ENCODE measurements at regions of chr16 and their contacts with region 1.

Region 1: DNA sequence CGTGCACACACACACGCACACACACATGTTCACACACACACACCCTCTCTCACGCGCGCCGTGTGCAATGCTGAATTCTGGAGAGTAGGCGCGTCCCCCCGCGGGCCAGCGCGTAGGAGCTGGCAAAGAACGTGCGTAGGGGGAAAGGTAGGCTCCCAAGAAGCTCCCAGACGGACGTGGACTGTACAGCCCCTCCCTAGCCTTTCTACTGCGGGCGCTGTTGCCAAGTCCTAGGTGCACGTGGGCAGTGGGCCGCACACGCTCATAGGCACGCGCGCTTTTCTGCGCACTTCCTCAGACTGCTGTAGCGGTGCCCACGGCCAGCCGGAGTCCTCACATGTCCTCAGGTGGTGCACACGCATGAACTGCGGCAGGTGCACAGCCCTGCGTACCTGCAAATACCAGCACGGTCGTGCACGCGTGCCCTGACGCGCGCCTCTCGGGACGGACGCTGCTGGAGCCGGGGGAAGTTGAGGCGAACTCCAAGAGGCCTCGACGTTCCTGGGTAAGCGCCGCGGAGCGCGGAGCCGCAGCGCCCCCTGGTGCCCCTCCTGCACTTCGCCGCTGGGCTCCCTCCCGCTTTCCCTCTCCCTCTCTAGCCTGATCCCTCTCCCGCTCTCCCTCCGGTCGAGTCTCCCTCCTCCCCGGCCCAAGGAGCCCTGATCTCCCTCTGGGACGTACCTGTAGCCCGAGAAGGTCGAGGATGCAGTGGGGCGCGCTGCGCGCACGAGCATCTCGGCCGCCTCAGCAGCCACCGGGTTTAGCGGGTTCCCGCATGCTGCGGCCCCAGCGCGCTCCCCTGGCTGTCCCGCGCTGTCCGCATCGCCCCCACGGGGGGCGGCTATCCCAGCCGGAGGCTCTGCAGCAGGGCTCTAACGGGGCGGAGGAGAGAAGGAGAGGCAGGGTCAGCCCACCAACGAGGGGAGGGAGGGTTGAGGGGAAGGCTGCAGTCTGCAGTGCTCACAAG is 749 bp downstream of the GRIN2A start:
- DNase-seq: peak; percentile 70 to 95
- H3K4me3 ChIP-seq: peak overlapping the region; percentile 50 to 73 (median 60)
- H3K27ac ChIP-seq: no peak overlapping the region
- H3K4me1 ChIP-seq: peaks cover 0 to 6% (median 0%) of the 10 kb centered on the region in 4 experiments; a peak in 3 of 7 replicates
- H3K27me3 ChIP-seq: peaks cover 26 to 50% (median 44%) of the 10 kb centered on the region in 4 experiments
- CTCF ChIP-seq: peak; percentile 75 to 97 (median 95)
- EP300 ChIP-seq: no peak
- POLR2A ChIP-seq: no peak
- RAD21 ChIP-seq: peak; percentile 93

Region 2: GRCh38 chr16:10080036-10080772 is 101.3 kb before region 1 on chr16:
- CTCF ChIA-PET with region 1: interaction called, 16 read pairs
- POLR2A ChIA-PET with region 1: no interaction called
- DNase-seq: no peak
- H3K4me3 ChIP-seq: no peak overlapping the region
- H3K27ac ChIP-seq: no peak overlapping the region
- H3K4me1 ChIP-seq: peaks cover 5 to 7% (median 6%) of the 10 kb centered on the region in 4 experiments; a peak in 3 of 7 replicates
- H3K27me3 ChIP-seq: peaks cover 0 to 2% (median 0%) of the 10 kb centered on the region in 4 experiments; a peak in 2 of 7 replicates
- CTCF ChIP-seq: no peak
- EP300 ChIP-seq: no peak
- POLR2A ChIP-seq: no peak
- RAD21 ChIP-seq: no peak

Region 3: DNA sequence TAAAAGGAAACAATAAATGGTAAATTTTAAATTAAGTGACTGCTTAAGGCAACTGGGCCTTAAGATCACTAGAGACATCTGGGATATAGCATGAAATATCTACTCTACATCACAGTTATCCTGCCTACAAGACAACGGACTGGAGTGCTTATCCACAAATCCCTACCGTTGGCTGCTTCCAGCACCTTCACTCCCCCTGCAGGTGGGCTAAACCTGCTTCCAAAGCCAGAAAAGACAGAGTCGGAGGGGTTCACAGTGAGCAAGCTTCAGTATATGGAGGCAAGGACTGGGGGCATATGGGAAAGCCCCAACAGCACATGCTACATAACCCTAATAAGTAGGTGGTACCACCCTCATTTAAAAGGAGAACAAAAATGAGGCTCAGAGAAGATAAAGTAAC is 44.6 kb before region 1 on chr16:
- CTCF ChIA-PET with region 1: interaction called, 13 read pairs
- POLR2A ChIA-PET with region 1: interaction called, 3 read pairs
- DNase-seq: peak in 1 of 2 experiments; percentile 53
- H3K4me3 ChIP-seq: no peak overlapping the region
- H3K27ac ChIP-seq: no peak overlapping the region
- H3K4me1 ChIP-seq: no peaks in the 10 kb centered on the region
- H3K27me3 ChIP-seq: no peaks in the 10 kb centered on the region
- CTCF ChIP-seq: peak; percentile 48 to 59 (median 48); a peak in 3 of 4 replicates
- EP300 ChIP-seq: no peak
- POLR2A ChIP-seq: no peak
- RAD21 ChIP-seq: peak; percentile 50 to 59

Region 4: DNA sequence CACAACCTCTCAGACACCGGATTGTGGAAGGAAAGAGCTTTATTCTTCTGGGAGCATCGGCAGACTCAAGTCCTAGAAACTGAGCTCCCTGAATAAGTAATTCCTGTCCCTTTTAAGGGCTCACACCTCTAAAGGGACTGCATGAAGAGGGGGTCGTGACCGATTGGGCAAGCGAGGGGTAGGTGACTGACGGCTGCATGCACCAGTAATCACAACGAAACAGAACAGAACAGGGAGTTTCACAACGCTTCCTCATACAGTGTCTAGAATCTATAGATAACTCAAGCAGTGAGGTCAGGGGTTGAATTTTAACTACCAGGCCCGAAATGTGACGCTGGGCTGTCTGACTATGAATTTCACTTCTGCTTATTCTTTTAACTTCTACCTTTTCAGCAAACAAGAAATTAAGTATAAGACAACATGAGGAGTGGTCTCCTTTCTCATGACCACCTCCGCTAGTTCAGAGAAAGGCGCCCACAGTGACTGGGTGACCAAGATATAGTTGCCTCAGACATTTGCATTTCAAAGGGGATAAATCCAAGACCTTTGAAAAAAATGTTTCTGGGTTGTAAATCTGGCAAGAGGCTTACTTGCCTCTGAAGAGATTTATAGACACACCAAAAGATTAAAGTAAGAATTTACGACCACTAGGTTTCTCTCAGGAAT is 116.0 kb after region 1 on chr16:
- CTCF ChIA-PET with region 1: no interaction called
- POLR2A ChIA-PET with region 1: no interaction called
- DNase-seq: no peak
- H3K4me3 ChIP-seq: no peak overlapping the region
- H3K27ac ChIP-seq: no peak overlapping the region
- H3K4me1 ChIP-seq: no peaks in the 10 kb centered on the region
- H3K27me3 ChIP-seq: no peaks in the 10 kb centered on the region
- CTCF ChIP-seq: no peak
- EP300 ChIP-seq: no peak
- POLR2A ChIP-seq: no peak
- RAD21 ChIP-seq: no peak